ENCODE measurements at regions of chr20 and their contacts with region 1.

Region 1: DNA sequence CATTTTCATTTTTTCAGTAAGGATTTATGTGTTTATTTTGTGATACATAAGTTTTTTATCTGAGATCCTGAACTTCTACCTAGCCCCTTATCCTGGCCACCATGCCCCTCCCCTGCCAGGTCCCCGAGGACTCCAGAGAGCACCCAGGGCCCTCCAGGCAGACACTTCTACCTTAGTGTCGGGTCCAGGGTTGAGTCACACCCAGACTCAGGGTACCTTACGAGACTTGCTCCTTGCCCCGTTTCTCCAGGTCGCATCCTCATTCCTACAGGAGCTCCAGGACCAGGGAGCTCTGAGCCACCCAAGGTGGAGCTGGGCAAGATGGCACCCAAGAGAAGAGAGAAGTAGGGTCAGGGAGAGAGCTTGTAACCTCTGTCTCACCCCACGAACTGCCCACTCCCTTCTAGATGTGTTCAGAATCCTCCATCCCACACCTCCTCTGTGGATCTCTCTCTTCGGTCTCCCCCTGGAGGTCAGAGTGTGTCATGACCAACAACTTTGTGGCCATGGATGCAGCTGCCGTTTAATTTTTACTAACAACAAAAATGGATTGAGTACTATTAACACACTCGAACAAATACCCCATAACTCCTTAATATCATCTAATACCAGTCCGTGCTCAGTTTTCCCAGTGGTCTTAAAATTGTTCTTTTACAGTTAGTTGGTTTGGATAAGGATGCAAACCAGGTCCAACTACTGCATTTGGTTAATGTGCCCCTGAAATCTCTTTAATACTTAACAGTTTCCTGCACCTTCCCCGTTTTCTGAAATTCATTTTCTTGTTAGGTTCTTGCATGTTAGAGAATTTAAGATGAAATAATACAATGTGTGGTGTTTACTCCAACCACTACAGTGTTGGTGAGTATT is 130.6 kb upstream of the INSM1 start:
- DNase-seq: peak; percentile 71
- H3K4me3 ChIP-seq: no peak overlapping the region
- H3K27ac ChIP-seq: no peak overlapping the region
- H3K4me1 ChIP-seq: peaks cover 0 to 18% of the 10 kb centered on the region in 2 experiments; a peak in 2 of 4 replicates
- H3K27me3 ChIP-seq: no peaks in the 10 kb centered on the region; the same call in 1 of the 2 replicates
- CTCF ChIP-seq: peak; percentile 72
- EP300 ChIP-seq: no peak
- RAD21 ChIP-seq: peak; percentile 83

Region 2: DNA sequence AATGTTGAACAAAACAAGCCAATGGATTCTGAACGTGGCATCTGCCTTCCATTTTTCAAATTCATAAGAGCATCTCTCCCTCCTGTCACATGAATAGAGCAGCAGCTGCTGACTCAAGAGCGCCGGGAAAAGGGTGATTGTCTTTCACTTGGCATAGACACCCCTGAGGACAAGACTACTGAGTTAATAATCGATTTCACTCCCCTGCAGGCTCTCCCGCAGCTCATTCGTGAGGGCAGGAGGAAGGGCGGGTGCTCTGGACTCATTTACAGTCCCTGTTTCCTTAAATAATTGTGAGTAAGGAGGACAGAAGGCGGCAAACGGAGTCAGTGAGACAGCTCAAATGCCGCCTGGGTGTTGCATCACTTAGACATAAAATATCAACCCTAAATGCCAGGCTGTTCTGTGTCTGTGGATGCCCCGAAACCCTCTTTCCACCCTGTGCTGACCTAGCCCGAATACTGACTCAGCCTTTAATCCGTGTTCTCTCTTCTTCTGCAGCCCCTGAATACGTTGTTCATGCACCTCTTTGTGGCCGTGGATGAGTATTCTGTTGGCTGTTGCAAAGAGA is 163.4 kb before region 1 on chr20:
- CTCF ChIA-PET with region 1: interaction called, 14 read pairs
- POLR2A ChIA-PET with region 1: no interaction called
- DNase-seq: no peak
- H3K4me3 ChIP-seq: no peak overlapping the region
- H3K27ac ChIP-seq: no peak overlapping the region
- H3K4me1 ChIP-seq: no peaks in the 10 kb centered on the region; a peak in 1 of 4 replicates
- H3K27me3 ChIP-seq: no peaks in the 10 kb centered on the region
- CTCF ChIP-seq: no peak
- EP300 ChIP-seq: no peak
- RAD21 ChIP-seq: no peak

Region 3: DNA sequence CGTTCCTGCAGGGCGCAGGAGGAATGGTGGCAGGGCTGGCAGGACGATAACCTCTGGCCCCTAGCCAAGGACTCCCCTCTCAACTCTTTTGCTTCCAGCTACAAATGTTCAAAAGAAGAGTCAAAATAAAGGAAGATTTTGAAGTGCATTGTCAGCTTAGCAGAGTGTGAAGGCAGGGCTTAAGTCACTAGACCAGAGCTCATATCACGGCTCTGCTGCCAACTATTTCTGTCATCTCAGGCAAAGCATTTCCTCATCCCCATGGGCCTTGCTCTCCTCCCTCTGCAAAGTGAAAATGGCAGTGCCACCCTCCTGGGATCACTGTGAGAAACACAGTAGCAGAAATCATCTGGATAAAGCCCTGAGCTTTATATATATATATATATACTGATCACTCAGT is 148.3 kb before region 1 on chr20:
- CTCF ChIA-PET with region 1: interaction called, 77 read pairs
- POLR2A ChIA-PET with region 1: no interaction called
- DNase-seq: no peak
- H3K4me3 ChIP-seq: no peak overlapping the region
- H3K27ac ChIP-seq: no peak overlapping the region
- H3K4me1 ChIP-seq: no peaks in the 10 kb centered on the region; a peak in 2 of 4 replicates
- H3K27me3 ChIP-seq: no peaks in the 10 kb centered on the region
- CTCF ChIP-seq: no peak
- EP300 ChIP-seq: no peak
- RAD21 ChIP-seq: no peak

Region 4: GRCh38 chr20:20199361-20200160 is 37.8 kb before region 1 on chr20:
- CTCF ChIA-PET with region 1: interaction called, 10 read pairs
- POLR2A ChIA-PET with region 1: no interaction called
- DNase-seq: peak; percentile 76
- H3K4me3 ChIP-seq: no peak overlapping the region
- H3K27ac ChIP-seq: no peak overlapping the region
- H3K4me1 ChIP-seq: peaks cover 0 to 27% of the 10 kb centered on the region in 2 experiments; a peak in 2 of 4 replicates
- H3K27me3 ChIP-seq: no peaks in the 10 kb centered on the region; the same call in 1 of the 2 replicates
- CTCF ChIP-seq: no peak
- EP300 ChIP-seq: peak in 1 of 2 experiments; percentile 14; a peak in 2 of 4 replicates
- RAD21 ChIP-seq: no peak

Region 5: GRCh38 chr20:20225325-20226043 is 11.8 kb before region 1 on chr20:
- CTCF ChIA-PET with region 1: interaction called, 41 read pairs
- POLR2A ChIA-PET with region 1: no interaction called
- DNase-seq: no peak
- H3K4me3 ChIP-seq: no peak overlapping the region
- H3K27ac ChIP-seq: no peak overlapping the region
- H3K4me1 ChIP-seq: no peaks in the 10 kb centered on the region
- H3K27me3 ChIP-seq: no peaks in the 10 kb centered on the region
- CTCF ChIP-seq: no peak
- EP300 ChIP-seq: no peak
- RAD21 ChIP-seq: no peak

Region 6: DNA sequence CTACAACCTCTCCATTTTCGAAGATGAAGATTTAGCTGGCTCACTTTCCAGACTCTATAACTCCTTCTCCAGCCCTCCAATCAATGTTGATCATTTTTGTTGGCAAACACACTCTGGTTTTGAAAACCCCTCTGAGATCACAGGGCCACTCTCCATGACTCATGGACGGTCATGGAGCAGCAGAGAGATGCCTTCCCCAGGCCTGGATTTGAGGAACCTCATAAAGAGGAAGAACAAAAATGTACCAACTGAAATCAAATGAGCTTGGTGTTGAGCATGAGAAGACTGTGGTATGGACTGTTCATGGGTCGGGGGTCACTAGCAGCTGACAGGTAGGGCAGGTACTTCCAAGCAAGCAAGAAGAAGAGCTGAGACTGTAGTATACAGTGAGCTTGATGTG is 17.8 kb after region 1 on chr20:
- CTCF ChIA-PET with region 1: interaction called, 55 read pairs
- POLR2A ChIA-PET with region 1: no interaction called
- DNase-seq: no peak
- H3K4me3 ChIP-seq: no peak overlapping the region
- H3K27ac ChIP-seq: no peak overlapping the region
- H3K4me1 ChIP-seq: peaks cover 0 to 9% of the 10 kb centered on the region in 2 experiments; a peak in 2 of 4 replicates
- H3K27me3 ChIP-seq: no peaks in the 10 kb centered on the region; the same call in 1 of the 2 replicates
- CTCF ChIP-seq: no peak
- EP300 ChIP-seq: no peak
- RAD21 ChIP-seq: no peak

Region 7: GRCh38 chr20:20593447-20594170 is 356.3 kb after region 1 on chr20:
- CTCF ChIA-PET with region 1: interaction called, 18 read pairs
- POLR2A ChIA-PET with region 1: no interaction called
- DNase-seq: peak; percentile 49
- H3K4me3 ChIP-seq: peak overlapping the region in 1 of 2 experiments; percentile 27; a peak in 1 of 4 replicates
- H3K27ac ChIP-seq: no peak overlapping the region
- H3K4me1 ChIP-seq: no peaks in the 10 kb centered on the region; a peak in 1 of 4 replicates
- H3K27me3 ChIP-seq: no peaks in the 10 kb centered on the region
- CTCF ChIP-seq: peak; percentile 63
- EP300 ChIP-seq: no peak
- RAD21 ChIP-seq: peak; percentile 55